Right ventricle myocardium inferior (tissue), 1 donor: ENCODE measurements at regions of chr5 and their contacts with region 1.

Region 1: GRCh38 chr5:134070725-134071613 is 43.5 kb upstream of the TCF7 start:
- DNase-seq: no peak
- ATAC-seq: peak; percentile 28

Region 2: DNA sequence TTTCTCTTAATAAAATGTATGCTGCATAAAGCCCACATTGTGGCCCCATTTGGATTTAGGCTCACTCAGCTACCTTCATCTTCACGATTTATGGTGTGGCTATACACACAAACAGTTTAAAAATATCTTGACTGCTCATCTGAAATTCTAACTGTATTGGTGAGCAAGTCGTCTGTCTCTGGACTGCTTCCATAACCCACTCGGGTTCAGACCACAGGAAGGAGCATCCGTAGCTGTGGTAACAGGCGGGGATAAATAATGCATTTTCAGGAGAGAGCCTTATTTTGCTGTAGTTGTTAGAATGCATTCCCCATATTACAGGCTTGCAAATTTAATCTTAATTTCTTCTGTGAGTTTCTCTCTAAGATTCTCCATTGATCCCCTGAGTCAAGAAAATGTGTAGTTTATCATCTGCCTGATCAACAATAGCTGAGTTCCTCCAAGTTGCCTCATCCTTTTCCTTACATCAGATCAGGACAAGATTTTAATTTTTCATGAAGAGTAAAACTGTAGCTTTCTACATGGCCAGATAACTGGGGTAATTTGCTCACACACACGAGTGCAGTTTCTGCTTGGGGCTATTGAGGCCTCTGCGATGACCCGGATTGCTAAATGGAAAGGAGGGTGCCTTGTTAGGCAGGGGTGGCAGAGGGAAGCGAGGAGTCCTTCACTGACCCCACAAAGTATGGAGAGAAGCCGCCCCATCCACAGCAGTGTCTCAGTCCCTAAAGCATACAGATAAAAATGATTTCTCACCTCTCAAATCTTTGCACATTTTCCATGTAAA is 592.6 kb before region 1 on chr5:
- intact Hi-C with region 1: no loop called
- DNase-seq: no peak
- ATAC-seq: no peak

Region 3: DNA sequence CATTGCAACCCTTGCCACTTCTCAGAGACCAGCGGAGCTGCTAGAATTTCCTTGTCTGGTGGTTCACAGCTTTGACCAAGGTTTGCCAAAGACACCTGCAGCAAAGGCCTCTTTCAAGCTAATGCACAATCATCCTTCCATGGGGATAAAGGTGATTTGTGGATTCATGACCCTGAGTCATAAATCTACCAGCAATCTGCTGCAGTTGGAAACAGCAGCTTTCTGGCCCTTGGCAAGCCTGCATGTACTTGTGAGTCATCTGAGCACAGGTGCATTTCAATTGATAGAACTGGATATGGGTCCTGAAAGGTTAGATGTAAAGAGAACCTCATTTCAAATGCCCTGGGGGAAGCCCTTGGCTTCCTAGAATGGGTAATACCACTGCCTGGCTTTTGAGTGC is 21.9 kb after region 1 on chr5:
- intact Hi-C with region 1: loop called (anchors 1 kb)
- DNase-seq: no peak
- ATAC-seq: no peak

Region 4: DNA sequence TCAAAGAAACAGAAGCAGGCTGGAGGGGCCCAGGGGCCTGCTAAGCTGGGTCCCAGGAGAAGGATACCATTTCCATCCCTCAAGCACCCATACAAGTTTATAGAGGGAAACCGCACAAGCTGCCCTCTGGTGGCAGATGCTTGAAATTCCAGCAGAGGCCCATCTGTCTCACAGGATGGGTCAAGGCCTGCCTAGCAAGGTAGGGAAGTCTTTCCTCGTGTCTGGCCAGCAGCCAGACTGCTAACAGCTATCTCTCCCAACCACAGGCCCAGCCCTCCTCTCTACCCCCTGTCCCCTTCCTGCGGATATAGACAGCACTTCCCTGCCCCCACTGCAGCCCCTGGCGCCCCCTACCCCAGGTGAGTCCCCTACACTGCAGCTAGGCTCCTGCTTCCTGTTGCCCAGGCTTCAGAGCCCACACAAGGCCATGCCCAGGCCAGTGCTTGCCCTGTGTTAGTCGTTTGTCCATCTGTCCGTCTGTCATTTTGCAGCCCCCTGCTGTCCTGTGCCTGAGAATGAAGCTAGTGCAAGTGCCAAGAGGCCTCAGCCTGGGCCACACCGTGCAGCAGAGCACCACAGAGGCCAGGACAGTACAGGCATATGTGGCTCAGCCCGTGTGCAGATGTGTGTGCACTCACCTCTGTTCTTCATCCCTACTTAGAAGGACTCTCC is 69.7 kb after region 1 on chr5:
- intact Hi-C with region 1: no loop called
- DNase-seq: no peak
- ATAC-seq: peak; percentile 66

Region 5: GRCh38 chr5:134370871-134371833 is 300.2 kb after region 1 on chr5 and contains the start of gene UBE2B:
- intact Hi-C with region 1: no loop called
- DNase-seq: peak; percentile 98
- ATAC-seq: peak; percentile 94
- total RNA-seq, gene UBE2B: 258 TPM